Panc1 (cell line): ENCODE measurements at regions of chr4 and their contacts with region 1.

Region 1: GRCh38 chr4:44760142-44760898 is 34.0 kb upstream of the GNPDA2 start:
- DNase-seq: peak; percentile 5
- ATAC-seq: no peak
- H3K4me3 ChIP-seq: no peak overlapping the region
- H3K27ac ChIP-seq: no peak overlapping the region
- H3K4me1 ChIP-seq: no peaks in the 10 kb centered on the region
- H3K27me3 ChIP-seq: no peaks in the 10 kb centered on the region
- CTCF ChIP-seq: peak; percentile 53; the same call in 1 of the 2 replicates

Region 2: DNA sequence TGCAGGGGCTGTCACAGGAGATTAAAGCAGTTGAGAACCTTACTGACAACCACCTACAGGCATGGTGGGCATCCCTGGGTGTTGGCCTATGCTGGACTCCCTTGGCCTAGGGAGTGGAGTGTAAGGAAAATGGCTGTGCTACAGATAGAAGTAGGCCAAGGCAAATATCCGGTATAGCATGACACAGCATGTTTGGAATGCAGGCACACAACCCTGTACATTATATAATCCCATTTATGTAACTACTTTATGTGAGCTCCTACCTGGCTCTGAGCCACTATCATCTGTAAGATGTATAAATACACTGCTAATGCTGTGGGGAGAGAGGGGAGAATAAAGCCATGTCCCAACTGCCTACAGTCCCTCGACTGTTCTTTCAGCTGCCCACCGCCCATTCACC is 273.0 kb before region 1 on chr4:
- CTCF ChIA-PET with region 1: no interaction called
- POLR2A ChIA-PET with region 1: no interaction called
- in situ Hi-C with region 1: no loop called
- intact Hi-C with region 1: no loop called
- DNase-seq: no peak
- ATAC-seq: no peak
- H3K4me3 ChIP-seq: no peak overlapping the region
- H3K27ac ChIP-seq: no peak overlapping the region
- H3K4me1 ChIP-seq: no peaks in the 10 kb centered on the region
- H3K27me3 ChIP-seq: no peaks in the 10 kb centered on the region
- CTCF ChIP-seq: no peak

Region 3: GRCh38 chr4:44916411-44916810 is 156.1 kb after region 1 on chr4:
- CTCF ChIA-PET with region 1: no interaction called
- POLR2A ChIA-PET with region 1: no interaction called
- in situ Hi-C with region 1: no loop called
- intact Hi-C with region 1: loop called (anchors 5 kb)
- DNase-seq: no peak
- ATAC-seq: no peak
- H3K4me3 ChIP-seq: peak overlapping the region; percentile 7 to 15; a peak in 2 of 4 replicates
- H3K27ac ChIP-seq: no peak overlapping the region
- H3K4me1 ChIP-seq: no peaks in the 10 kb centered on the region
- H3K27me3 ChIP-seq: no peaks in the 10 kb centered on the region
- CTCF ChIP-seq: no peak

Region 4: DNA sequence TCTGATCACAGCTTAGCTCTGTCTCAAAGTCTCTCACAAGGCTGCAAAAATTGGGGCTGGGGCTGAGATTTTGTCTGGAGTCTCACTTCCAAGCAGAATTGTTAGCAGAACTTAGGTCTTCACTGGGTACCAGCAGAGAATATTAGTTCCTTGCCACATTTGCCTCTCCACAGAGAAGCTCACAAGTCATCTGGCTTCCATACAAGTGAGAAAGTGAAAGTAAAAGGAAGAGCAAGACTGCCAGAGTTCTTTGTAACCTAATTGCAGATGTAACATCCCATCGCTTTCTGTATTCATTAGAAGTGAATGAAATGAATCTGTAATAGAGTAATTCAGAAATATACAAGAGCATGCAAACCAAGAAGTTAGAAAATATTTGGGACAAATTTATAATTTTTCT is 590.1 kb after region 1 on chr4:
- CTCF ChIA-PET with region 1: no interaction called
- POLR2A ChIA-PET with region 1: no interaction called
- in situ Hi-C with region 1: no loop called
- intact Hi-C with region 1: no loop called
- DNase-seq: no peak
- ATAC-seq: no peak
- H3K4me3 ChIP-seq: peak overlapping the region in 1 of 2 experiments; percentile 11; a peak in 1 of 4 replicates
- H3K27ac ChIP-seq: no peak overlapping the region
- H3K4me1 ChIP-seq: no peaks in the 10 kb centered on the region
- H3K27me3 ChIP-seq: no peaks in the 10 kb centered on the region
- CTCF ChIP-seq: no peak

Region 5: DNA sequence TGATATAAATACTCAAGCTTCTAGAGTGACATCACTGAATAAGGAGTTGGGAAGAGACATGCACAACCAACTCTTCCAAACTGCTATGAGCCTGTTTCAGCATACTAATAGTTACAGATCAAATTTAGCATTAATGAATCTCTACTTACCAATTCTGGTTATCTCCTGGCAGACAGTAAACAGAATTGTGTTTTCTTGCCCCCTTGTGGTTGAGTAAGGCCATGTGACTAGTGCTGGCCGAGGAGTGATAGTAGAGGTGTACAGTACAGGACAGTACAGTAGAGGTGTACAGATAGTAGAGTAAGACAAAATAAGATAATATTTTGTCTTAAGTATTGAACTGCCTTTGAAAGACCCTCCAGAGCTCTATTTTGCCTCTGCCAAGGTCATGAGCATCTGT is 682.1 kb after region 1 on chr4:
- CTCF ChIA-PET with region 1: no interaction called
- POLR2A ChIA-PET with region 1: no interaction called
- in situ Hi-C with region 1: no loop called
- intact Hi-C with region 1: loop called (anchors 10 kb)
- DNase-seq: no peak
- ATAC-seq: no peak
- H3K4me3 ChIP-seq: no peak overlapping the region
- H3K27ac ChIP-seq: no peak overlapping the region
- H3K4me1 ChIP-seq: no peaks in the 10 kb centered on the region
- H3K27me3 ChIP-seq: no peaks in the 10 kb centered on the region
- CTCF ChIP-seq: no peak; the same call in 1 of the 2 replicates

Region 6: GRCh38 chr4:46270986-46271596 is 1510.8 kb after region 1 on chr4:
- CTCF ChIA-PET with region 1: no interaction called
- POLR2A ChIA-PET with region 1: no interaction called
- in situ Hi-C with region 1: no loop called
- intact Hi-C with region 1: loop called (anchors 5 kb)
- DNase-seq: peak; percentile 10
- ATAC-seq: no peak
- H3K4me3 ChIP-seq: no peak overlapping the region
- H3K27ac ChIP-seq: no peak overlapping the region
- H3K4me1 ChIP-seq: no peaks in the 10 kb centered on the region
- H3K27me3 ChIP-seq: no peaks in the 10 kb centered on the region
- CTCF ChIP-seq: peak; percentile 40; the same call in 1 of the 2 replicates